Brain microvascular endothelial cell (primary cell): ENCODE measurements at regions of chr10 and their contacts with region 1.

Region 1: DNA sequence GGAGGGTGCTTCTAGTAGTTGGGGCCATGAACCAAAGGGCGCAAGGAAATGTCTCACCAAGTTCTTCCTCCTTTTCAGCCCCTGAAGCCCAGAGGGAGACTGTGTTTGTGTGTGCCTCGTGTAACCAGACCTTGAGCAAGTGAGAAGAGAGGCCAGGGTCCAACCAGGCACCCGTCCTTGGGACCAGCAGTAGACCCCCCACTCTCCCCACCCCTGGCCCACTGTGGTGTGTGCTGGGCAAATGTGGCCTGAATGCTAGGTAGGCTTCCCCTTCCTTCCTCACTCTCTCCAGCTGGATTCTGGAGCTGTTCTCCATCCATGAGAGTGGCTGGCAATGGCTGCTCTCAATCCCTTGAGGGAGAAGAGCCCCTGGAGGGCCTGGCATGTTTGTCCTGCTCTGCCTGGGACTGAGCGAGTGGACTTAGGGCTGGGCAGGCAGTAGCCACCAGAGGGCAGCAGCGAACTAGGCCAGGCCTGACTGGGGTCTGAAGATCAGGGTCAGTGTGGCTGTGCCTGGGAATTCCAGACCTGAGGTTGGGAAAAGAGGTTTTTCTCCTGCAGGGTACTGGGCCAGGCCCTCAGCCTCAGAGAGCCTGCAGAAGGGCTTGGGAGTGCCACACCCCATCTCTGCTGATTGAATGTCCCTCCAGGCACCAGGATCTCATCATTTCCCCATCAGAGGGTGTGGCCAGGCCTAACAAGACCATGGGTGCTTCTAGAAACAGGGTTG is 12.5 kb downstream of the SFRP5 start:
- DNase-seq: peak; percentile 40
- H3K4me3 ChIP-seq: no peak overlapping the region
- H3K27ac ChIP-seq: no peak overlapping the region
- H3K27me3 ChIP-seq: no peaks in the 10 kb centered on the region
- CTCF ChIP-seq: peak; percentile 97

Region 2: GRCh38 chr10:97869091-97870042 is 110.0 kb after region 1 on chr10:
- in situ Hi-C with region 1: loop called (anchors 25 kb)
- DNase-seq: peak; percentile 90
- H3K4me3 ChIP-seq: no peak overlapping the region
- H3K27ac ChIP-seq: no peak overlapping the region
- H3K27me3 ChIP-seq: peaks cover 38% of the 10 kb centered on the region
- CTCF ChIP-seq: peak; percentile 92